ENCODE measurements at regions of chr10 and their contacts with region 1.

Region 1: DNA sequence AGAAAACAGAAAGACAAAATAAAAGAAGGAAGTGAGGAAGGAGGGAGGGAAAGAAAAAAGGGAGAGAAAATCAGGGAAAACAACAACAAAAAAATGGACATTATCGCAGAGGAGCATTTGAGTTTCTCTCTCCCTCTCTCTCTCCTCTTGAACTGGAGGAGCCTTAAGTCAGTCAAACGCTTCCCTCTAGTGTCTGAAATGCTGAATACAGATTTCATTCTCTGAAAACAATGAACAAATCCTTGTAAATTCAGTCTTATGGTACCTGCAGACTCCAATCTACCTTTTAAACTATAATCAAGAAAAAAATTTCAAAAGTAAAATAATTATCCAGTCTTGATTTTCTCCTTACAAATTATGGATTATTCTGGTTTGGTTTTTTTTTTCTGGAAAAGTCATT is 89.2 kb upstream of the PFKP start:
- DNase-seq: no peak
- H3K4me3 Mint-ChIP-seq: no peak overlapping the region
- H3K27ac Mint-ChIP-seq: no peak overlapping the region
- H3K4me1 Mint-ChIP-seq: no peaks in the 10 kb centered on the region
- H3K27me3 Mint-ChIP-seq: no peaks in the 10 kb centered on the region

Region 2: GRCh38 chr10:2927958-2928840 is 49.9 kb before region 1 on chr10:
- intact Hi-C with region 1: loop called (anchors 1 kb)
- DNase-seq: peak; percentile 89
- H3K4me3 Mint-ChIP-seq: no peak overlapping the region
- H3K27ac Mint-ChIP-seq: no peak overlapping the region
- H3K4me1 Mint-ChIP-seq: peaks cover 9% of the 10 kb centered on the region
- H3K27me3 Mint-ChIP-seq: peaks cover 15% of the 10 kb centered on the region

Region 3: GRCh38 chr10:2948127-2948854 is 29.8 kb before region 1 on chr10:
- intact Hi-C with region 1: loop called (anchors 5 kb)
- DNase-seq: peak; percentile 64
- H3K4me3 Mint-ChIP-seq: peak overlapping the region; percentile 5
- H3K27ac Mint-ChIP-seq: peak overlapping the region; percentile 77
- H3K4me1 Mint-ChIP-seq: peaks cover 13% of the 10 kb centered on the region
- H3K27me3 Mint-ChIP-seq: peaks cover 2% of the 10 kb centered on the region